ENCODE measurements at regions of chr15 and their contacts with region 1.

Region 1: DNA sequence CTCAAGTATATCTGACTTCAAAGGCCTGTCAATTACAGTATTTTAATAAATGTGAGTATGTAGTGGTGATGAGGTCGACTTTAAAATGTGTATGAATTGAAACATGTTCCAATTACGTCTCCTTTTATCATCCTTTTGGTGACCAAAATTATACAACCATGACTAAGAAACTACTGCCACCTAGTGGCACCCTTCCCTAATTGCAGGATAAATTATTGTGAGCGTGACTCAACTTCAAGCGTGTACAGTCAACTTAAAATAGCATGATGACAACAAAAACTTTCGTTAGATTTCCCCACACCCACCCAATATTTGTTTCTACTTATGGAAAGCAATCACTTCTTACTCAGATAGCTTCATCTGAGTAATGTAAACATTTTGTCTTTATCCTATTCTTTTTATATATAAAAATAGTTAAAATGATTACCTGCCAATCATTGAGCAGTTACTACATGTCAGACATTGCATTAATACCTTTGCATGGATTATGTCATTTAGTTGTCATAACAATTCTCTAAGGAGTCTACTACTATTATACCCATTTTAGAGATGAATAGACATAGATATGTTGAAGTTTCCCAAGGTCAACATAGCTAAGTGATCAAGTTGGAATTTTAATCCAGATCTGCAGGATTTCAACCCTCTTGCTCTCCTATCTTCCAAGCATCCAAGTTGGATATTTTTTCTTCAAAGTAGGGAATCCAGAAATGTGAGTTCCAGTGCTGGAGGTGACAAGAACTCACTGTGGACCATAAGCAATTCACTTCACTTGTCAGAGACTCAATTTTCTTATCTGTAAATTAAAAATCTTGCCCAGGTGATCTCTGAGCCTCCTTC is 106.0 kb downstream of the MEX3B start:
- DNase-seq: no peak
- H3K4me3 ChIP-seq: no peak overlapping the region
- H3K27ac ChIP-seq: no peak overlapping the region
- H3K4me1 ChIP-seq: no peaks in the 10 kb centered on the region
- H3K27me3 ChIP-seq: no peaks in the 10 kb centered on the region
- CTCF ChIP-seq: peak in 3 of 4 experiments; percentile 30 to 56 (median 31)
- EP300 ChIP-seq: no peak
- POLR2A ChIP-seq: no peak

Region 2: GRCh38 chr15:81338170-81339007 is 601.4 kb before region 1 on chr15:
- intact Hi-C with region 1: no loop called
- DNase-seq: peak; percentile 85
- H3K4me3 ChIP-seq: no peak overlapping the region
- H3K27ac ChIP-seq: peak overlapping the region; percentile 19 to 54 (median 26)
- H3K4me1 ChIP-seq: peaks cover 0 to 29% (median 20%) of the 10 kb centered on the region in 4 donors
- H3K27me3 ChIP-seq: no peaks in the 10 kb centered on the region
- CTCF ChIP-seq: no peak
- EP300 ChIP-seq: peak in 1 of 4 donors; percentile 13
- POLR2A ChIP-seq: no peak

Region 3: DNA sequence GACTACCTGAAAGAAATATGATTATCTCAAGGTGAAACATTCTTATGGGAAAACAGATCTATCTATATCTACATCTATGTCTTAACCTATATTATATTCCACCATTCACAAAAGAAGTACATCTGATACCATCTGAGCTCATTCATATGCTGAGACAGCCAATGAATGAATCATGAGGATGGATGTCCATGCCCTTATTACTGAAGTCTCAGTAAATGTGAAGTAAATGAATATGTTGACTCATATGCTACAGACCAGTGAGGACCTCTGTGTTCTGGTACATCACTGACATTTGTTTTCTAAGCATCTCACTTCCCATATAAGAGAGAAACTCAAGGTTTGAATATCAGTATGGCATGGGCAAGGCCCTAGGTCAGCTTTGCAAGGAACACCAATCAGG is 254.6 kb before region 1 on chr15:
- intact Hi-C with region 1: no loop called
- DNase-seq: no peak
- H3K4me3 ChIP-seq: no peak overlapping the region
- H3K27ac ChIP-seq: no peak overlapping the region
- H3K4me1 ChIP-seq: no peaks in the 10 kb centered on the region
- H3K27me3 ChIP-seq: no peaks in the 10 kb centered on the region
- CTCF ChIP-seq: no peak
- EP300 ChIP-seq: no peak
- POLR2A ChIP-seq: no peak

Region 4: DNA sequence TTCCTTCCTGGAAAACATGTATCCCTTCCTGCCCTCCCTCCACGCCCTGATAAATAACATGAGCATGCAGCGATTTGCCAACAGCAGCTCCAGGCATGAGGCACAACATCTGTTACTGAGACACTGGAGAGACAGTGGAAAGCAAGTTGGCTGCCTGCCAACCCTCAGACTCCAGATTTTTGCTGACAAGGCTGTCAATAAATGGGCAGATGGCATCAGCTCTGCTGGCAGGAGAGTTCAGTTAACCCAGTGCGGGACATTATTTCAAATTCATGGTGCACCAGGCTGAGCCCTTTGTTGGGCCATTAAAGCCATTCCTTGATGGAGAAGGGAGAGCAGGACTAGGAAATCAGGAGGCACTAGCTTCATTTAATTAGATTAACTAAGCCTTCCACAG is 187.3 kb before region 1 on chr15:
- intact Hi-C with region 1: loop called (anchors 10 kb)
- DNase-seq: peak; percentile 76
- H3K4me3 ChIP-seq: no peak overlapping the region
- H3K27ac ChIP-seq: no peak overlapping the region
- H3K4me1 ChIP-seq: peaks cover 0 to 33% (median 27%) of the 10 kb centered on the region in 4 donors
- H3K27me3 ChIP-seq: no peaks in the 10 kb centered on the region
- CTCF ChIP-seq: no peak
- EP300 ChIP-seq: no peak
- POLR2A ChIP-seq: no peak

Measured in sigmoid colon (tissue), 7 donors.